Aorta (tissue), 5 donors: ENCODE measurements at regions of chr4 and their contacts with region 1.

Region 1: DNA sequence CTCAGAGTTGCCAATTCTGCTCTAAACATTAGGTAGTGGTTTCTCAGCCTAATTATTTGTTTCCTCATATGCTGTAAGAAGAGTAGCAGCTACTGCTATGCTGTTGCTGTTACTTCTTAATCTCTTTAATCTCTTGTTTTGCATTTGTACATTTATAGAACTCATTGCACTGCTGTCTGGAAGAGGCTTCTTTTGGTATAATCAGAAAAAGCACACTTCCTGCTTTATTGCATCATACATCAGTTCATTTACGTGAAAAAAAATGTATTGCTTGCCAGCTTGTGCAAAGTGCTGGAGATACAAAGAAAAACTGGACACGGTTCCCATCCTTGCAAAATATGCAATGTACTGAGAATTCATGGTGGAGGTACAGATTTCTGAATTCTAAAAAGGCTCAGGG is 332.0 kb downstream of the GRXCR1 start:
- DNase-seq: no peak
- ATAC-seq: no peak
- H3K4me3 ChIP-seq: no peak overlapping the region
- H3K27ac ChIP-seq: no peak overlapping the region
- H3K4me1 ChIP-seq: no peaks in the 10 kb centered on the region
- H3K27me3 ChIP-seq: no peaks in the 10 kb centered on the region

Region 2: DNA sequence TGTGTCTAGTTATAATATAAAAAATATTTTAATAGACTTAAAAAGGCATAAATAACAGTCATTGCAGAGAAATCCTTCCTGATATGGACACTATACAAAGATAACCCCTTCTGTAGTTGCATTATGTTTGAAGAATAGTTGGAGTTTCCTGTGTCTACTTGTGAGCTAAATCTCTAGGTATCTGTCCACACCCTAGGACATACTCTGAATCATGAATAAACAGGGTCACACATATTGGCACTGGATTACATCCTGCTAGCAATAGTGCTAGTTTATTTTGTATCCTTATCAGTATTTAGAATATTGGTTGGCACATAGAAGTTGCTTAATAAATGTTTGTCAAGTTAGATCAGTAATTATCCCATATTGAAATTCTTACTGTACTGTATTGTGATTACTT is 158.1 kb before region 1 on chr4:
- intact Hi-C with region 1: no loop called
- DNase-seq: no peak
- ATAC-seq: no peak
- H3K4me3 ChIP-seq: no peak overlapping the region
- H3K27ac ChIP-seq: no peak overlapping the region
- H3K4me1 ChIP-seq: no peaks in the 10 kb centered on the region
- H3K27me3 ChIP-seq: no peaks in the 10 kb centered on the region

Region 3: GRCh38 chr4:43275779-43276178 is 51.2 kb after region 1 on chr4:
- intact Hi-C with region 1: loop called in 1 of 2 experiments (anchors 2 kb)
- DNase-seq: no peak
- ATAC-seq: no peak
- H3K4me3 ChIP-seq: no peak overlapping the region
- H3K27ac ChIP-seq: no peak overlapping the region
- H3K4me1 ChIP-seq: no peaks in the 10 kb centered on the region
- H3K27me3 ChIP-seq: no peaks in the 10 kb centered on the region